Sigmoid colon (tissue), 7 donors: ENCODE measurements at regions of chr16 and their contacts with region 1.

Region 1: DNA sequence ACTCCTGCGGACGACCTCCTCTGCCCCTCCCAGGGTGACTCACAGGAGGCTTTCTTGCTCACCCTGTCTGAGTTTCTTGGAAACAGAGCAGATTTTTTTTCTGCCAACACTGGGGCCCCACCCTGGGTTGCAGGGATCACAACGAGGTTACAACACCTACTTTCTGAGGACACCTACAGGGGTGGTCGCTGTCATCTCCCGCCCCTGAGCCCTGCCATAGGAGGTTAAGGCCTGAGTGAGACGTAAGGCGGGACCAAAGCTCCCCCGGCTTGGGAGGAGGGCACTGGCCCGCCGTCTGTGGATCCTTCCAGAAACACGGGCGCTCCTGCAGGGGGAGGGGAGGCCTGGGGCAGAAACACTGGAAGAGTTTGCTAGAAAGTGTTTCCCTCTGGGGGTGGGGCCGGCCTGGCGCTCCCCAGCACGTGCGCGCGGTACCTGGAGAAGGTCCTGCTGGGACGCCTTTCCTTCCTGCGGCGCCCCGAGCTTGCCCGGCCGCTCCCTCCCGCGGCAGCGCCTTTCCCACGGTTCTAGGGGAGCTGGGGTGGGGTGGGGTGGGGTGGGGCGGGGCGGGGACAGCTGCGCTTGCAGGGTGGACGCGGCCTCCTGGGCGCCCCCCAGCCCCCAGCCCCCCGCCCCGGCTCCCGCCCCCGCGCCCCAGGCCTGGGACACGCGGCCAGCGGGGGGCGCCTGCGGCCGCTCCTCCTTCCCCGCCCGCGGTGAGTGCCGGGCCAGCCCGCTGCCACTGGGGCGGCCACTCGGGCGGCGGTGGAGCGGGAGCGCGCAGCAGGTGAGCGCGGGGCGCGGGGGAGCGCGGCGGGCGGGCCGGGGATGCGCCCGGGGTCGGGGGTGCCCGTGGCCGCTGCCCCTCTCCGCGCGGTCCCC is 20.7 kb upstream of the ADCY7 start:
- DNase-seq: no peak
- H3K4me3 ChIP-seq: peak overlapping the region; percentile 50 to 70 (median 63)
- H3K27ac ChIP-seq: peak overlapping the region in 3 of 4 donors; percentile 31 to 41 (median 37)
- H3K4me1 ChIP-seq: peaks cover 0 to 19% (median 17%) of the 10 kb centered on the region in 4 donors
- H3K27me3 ChIP-seq: no peaks in the 10 kb centered on the region
- CTCF ChIP-seq: peak in 1 of 4 experiments; percentile 36
- EP300 ChIP-seq: no peak
- POLR2A ChIP-seq: no peak

Region 2: DNA sequence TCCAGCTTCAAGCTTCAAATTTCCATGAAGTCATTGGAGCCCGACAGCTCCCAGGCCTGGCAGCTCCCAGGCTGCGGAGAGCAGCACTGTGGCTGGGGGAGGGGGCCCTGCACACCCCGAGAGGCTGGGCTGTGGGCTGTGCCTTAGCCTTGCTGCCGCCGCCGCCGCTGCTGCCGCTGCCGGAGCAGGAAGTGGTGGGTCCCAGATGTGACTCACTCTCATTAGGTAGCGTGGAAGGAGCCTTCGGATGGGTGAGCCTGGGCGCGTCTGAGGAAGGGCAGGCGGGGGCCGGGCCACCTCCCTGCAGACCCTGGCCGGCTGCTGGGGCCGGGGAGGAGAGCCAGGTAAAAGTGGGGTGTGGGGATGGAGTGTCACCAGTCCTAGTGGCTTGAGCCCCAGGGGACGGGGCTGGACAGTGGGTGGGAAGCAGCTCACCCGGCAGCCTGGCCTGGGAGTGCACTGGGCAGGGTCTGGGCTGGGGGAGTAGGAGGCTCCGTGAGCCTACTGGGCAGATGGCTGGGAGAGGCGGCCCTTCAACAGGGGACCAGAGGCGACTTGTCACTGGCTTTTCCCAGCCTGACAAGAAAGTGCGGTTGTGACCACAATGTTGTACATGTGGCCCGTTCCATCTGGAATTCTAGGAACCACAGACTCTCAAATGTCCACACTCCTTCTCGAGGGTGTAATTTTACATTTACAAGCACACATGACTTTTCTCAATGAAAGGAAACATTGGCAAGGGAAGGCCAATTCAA is 20.9 kb after region 1 on chr16 and contains the start of gene ADCY7:
- intact Hi-C with region 1: no loop called
- DNase-seq: peak; percentile 80
- H3K4me3 ChIP-seq: peak within 1 kb of the TSS in 3 of 4 donors; percentile 20 to 38 (median 32)
- H3K27ac ChIP-seq: peak within 1 kb of the TSS; percentile 13 to 60 (median 46)
- H3K4me1 ChIP-seq: peaks cover 0 to 11% (median 10%) of the 10 kb centered on the region in 4 donors
- H3K27me3 ChIP-seq: no peaks in the 10 kb centered on the region
- CTCF ChIP-seq: no peak
- EP300 ChIP-seq: no peak
- POLR2A ChIP-seq: no peak
- total RNA-seq, gene ADCY7: 8.9 to 16.8 (median 11.3) TPM

Region 3: DNA sequence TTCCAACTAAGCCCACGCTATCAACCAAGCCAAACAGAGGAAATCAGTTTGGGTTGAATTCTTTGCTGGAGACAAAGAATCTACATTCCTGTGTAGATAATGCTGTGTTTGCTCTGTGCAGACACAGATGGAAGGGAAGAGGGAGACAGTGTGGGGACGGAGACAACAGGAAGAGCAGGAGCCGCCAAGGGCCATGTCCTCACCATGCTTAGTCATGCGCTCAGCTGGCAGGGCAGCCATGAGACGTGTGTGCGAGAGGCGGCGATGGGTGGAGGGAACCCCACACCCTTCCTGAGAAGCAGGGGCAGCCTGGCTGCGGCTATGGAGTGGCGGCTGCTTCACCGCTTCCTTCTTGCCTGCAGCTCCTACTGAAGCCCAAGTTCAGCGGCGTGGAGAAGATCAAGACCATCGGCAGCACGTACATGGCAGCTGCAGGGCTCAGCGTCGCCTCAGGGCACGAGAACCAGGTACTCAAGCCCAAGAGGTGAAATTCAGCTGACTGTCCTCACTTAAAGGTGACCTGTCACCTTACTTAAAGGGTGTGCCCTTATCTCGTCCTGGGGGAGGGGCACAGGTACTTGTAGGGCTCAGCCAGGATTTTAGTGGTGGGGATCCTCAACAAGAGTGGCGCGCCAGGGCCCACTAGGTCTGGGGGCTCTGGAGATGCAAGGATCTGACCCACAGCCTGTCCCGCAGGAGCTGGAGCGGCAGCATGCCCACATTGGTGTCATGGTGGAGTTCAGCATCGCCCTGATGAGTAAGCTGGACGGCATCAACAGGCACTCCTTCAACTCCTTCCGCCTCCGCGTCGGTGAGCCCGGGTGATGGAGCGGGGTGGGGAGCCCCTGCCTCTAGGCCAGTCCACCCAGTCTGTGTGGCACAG is 68.2 kb after region 1 on chr16:
- intact Hi-C with region 1: loop called (anchors 10 kb)
- DNase-seq: peak; percentile 76
- H3K4me3 ChIP-seq: no peak overlapping the region
- H3K27ac ChIP-seq: peak overlapping the region in 1 of 4 donors; percentile 12
- H3K4me1 ChIP-seq: peaks cover 0 to 17% (median 13%) of the 10 kb centered on the region in 4 donors
- H3K27me3 ChIP-seq: no peaks in the 10 kb centered on the region
- CTCF ChIP-seq: no peak
- EP300 ChIP-seq: no peak
- POLR2A ChIP-seq: no peak